SK-MEL-5 (cell line): ENCODE measurements at regions of chr1 and their contacts with region 1.

Region 1: GRCh38 chr1:30085811-30086770 is 637.3 kb downstream of the MATN1 start:
- DNase-seq: peak; percentile 55

Region 2: DNA sequence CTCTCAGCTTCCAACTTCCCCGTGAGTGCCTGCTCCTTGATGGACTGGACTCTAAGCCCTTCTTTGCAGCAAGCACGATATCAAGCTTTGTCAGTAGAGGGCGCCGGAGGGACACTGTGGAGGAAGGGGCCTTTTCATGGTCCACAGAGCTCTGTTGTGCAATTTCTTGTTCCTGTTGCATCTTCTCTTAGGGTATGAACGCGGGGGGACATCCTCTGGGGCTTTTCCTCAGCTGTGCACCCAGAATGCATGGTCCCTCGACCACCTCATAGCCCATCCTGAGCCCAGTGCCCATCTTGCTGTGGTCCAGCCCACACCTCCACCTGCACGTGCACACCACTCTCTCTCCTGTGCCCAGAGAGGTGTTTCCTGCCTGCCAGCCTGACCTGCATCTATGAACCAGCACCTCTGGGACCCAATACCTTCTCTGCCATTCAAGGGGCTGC is 293.0 kb before region 1 on chr1:
- in situ Hi-C with region 1: loop called (anchors 25 kb)
- DNase-seq: peak; percentile 87

Region 3: DNA sequence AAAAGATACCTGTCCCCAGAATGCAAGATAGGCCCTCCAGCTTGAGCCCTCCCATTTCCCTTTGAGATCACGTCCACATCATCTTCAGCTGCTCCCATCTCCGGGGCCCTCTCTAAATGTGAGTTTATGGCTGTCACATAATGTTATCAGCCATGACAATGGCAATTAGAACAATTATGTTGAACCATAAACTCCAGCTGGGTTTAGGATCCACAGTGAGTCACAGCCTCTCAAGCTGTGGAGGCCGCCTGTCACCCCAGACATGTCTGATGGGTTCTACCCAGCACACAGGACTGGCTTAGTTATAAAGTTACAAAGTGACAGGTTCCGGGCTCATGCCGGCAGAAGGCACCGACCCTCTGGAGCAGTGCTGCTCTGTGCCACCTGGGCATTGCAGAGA is 252.5 kb before region 1 on chr1:
- in situ Hi-C with region 1: no loop called
- DNase-seq: no peak

Region 4: GRCh38 chr1:29944253-29944905 is 141.7 kb before region 1 on chr1:
- in situ Hi-C with region 1: no loop called
- DNase-seq: no peak

Region 5: GRCh38 chr1:29984538-29985357 is 101.3 kb before region 1 on chr1:
- in situ Hi-C with region 1: no loop called
- DNase-seq: no peak